Heart right ventricle (tissue), 16 donors: ENCODE measurements at regions of chr7 and their contacts with region 1.

Region 1: DNA sequence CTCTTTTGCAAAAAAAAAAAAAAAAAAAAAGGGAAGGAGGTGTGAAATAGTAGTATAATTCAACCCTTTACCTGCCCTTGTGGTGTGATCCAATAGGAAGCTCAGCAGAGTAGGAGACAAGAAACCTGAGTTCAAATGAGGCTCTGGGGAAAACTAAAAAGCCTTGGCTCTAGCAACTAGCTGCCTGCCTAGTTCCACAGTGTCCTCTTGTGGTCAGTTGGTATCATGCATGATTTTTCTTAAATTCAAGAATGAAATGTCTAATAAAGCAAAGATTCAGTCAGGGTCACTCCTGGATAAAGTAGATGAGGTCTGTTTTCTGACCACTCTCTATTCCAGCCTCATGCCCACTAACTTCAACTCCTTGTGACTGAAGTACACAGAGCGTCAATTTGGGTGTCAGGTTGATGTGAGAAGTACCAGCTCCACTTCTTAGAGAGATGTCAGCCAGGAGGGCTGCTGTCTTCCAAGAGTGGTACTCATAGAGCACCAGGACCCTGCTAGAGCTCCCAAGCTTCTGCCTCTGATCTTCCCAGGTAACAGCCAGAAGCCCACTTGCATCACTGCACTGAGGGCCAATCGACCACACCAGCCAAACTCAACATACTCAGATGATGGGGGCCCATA is 10.5 kb downstream of the LSM5 start:
- DNase-seq: peak in 1 of 2 donors; percentile 24
- ATAC-seq: peak in 2 of 8 donors; percentile 27 to 52
- H3K4me3 ChIP-seq: no peak overlapping the region
- H3K27ac ChIP-seq: no peak overlapping the region
- H3K4me1 ChIP-seq: peaks cover 0 to 16% (median 5%) of the 10 kb centered on the region in 9 donors
- H3K27me3 ChIP-seq: no peaks in the 10 kb centered on the region
- CTCF ChIP-seq: peak; percentile 41 to 79 (median 74)

Region 2: DNA sequence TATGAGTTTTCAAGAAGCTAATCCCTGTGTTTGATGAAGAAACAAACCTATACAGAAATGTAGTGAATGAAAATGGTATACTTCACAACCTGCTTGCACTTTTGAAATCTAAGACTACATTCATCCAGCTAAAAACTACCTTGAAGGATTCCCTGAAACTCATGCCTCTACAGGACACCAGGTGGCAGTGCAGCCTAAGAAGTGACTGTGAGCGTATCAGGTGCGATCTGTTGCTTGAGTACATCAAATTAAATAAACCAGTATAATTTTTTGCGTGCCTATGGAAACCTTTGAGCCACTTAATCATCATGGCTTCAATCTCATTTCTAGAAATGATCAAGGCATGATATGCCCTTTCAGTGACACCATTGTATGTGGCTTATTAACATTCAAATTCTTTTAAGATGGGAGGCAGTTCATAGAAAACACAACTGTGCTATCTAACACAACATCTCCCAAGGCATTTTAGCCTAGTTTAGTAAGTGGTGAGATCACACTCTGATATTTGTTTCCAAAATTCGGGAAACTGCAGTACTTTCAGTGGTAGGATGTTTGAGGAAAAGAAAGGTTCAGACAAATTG is 735.3 kb before region 1 on chr7:
- intact Hi-C with region 1: loop called in 7 of 10 experiments (anchors 2 to 10 kb)
- DNase-seq: peak; percentile 35 to 51
- ATAC-seq: peak in 5 of 8 donors; percentile 60 to 76 (median 63)
- H3K4me3 ChIP-seq: no peak overlapping the region
- H3K27ac ChIP-seq: no peak overlapping the region
- H3K4me1 ChIP-seq: no peaks in the 10 kb centered on the region
- H3K27me3 ChIP-seq: no peaks in the 10 kb centered on the region
- CTCF ChIP-seq: peak; percentile 66 to 89 (median 84)

Region 3: GRCh38 chr7:32212321-32212720 is 267.4 kb before region 1 on chr7:
- intact Hi-C with region 1: loop called (anchors 2 to 5 kb)
- DNase-seq: no peak
- ATAC-seq: no peak
- H3K4me3 ChIP-seq: no peak overlapping the region
- H3K27ac ChIP-seq: no peak overlapping the region
- H3K4me1 ChIP-seq: peaks cover 0 to 3% (median 0%) of the 10 kb centered on the region in 9 donors
- H3K27me3 ChIP-seq: peaks cover 0 to 19% (median 0%) of the 10 kb centered on the region in 7 donors
- CTCF ChIP-seq: no peak

Region 4: DNA sequence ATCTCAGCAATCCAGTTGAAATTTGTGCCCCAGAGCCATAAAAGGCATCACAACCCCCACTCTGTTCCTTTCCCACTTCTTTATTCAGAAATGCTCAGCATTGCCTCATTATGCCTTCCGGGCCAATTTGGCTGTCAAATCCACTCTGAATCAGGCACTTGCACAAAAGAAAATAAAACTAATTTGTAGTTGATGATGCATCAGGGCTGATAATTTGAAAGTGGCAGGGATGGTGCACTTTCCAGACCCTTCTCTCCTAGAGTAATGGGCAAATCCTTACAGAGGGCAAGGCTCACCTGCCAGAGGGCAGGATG is 261.6 kb before region 1 on chr7:
- intact Hi-C with region 1: loop called in 6 of 10 experiments (anchors 2 to 5 kb)
- DNase-seq: no peak
- ATAC-seq: peak in 1 of 8 donors; percentile 69
- H3K4me3 ChIP-seq: no peak overlapping the region
- H3K27ac ChIP-seq: no peak overlapping the region
- H3K4me1 ChIP-seq: peaks cover 0 to 5% (median 0%) of the 10 kb centered on the region in 9 donors
- H3K27me3 ChIP-seq: peaks cover 0 to 7% (median 0%) of the 10 kb centered on the region in 7 donors
- CTCF ChIP-seq: no peak